Heart right ventricle (tissue), 16 donors: ENCODE measurements at regions of chr6 and their contacts with region 1.

Region 1: DNA sequence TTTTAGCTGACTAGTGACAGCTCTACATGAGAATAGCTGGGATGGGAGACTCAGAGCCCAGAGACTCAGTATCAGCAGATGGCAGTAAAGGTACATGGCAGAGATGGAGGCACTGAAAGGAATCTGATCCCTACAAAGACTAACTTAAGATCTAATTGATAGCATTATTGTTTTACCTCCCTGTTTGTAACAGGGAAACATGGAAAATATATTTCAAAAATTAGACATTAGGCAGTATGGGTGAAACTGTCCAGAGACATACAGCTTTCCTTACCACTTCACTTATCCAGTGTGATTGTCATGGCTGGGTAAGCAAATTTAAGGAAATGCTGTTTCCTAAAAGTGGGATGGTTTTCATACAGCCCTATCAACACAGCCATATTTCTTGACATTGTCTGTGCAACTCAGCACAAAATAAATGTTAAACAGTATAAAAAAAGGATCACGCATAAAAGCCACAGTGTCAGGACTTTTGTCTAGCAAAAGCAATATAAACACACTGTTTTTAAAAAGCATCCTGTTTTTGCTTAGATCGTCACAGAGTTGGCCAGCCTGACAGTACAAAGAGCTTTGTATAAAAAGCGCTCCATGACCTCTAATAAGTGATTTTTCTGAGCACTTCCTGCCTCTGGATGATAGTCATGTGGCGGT is 376.9 kb downstream of the PHF3 start:
- DNase-seq: no peak
- ATAC-seq: peak in 5 of 8 donors; percentile 46 to 75 (median 67)
- H3K4me3 ChIP-seq: peak overlapping the region in 3 of 10 donors; percentile 6 to 13 (median 12)
- H3K27ac ChIP-seq: peak overlapping the region in 1 of 10 donors; percentile 2
- H3K4me1 ChIP-seq: peaks cover 0 to 8% (median 0%) of the 10 kb centered on the region in 9 donors
- H3K27me3 ChIP-seq: no peaks in the 10 kb centered on the region
- CTCF ChIP-seq: peak in 7 of 9 donors; percentile 26 to 70 (median 45)

Region 2: GRCh38 chr6:64330694-64331307 is 318.3 kb after region 1 on chr6:
- intact Hi-C with region 1: loop called in 3 of 10 experiments (anchors 5 to 10 kb)
- DNase-seq: peak; percentile 51 to 60
- ATAC-seq: no peak
- H3K4me3 ChIP-seq: no peak overlapping the region
- H3K27ac ChIP-seq: no peak overlapping the region
- H3K4me1 ChIP-seq: no peaks in the 10 kb centered on the region
- H3K27me3 ChIP-seq: no peaks in the 10 kb centered on the region
- CTCF ChIP-seq: peak in 7 of 9 donors; percentile 35 to 70 (median 57)